Activated CD4-positive, alpha-beta T cell treated with anti-CD3 and anti-CD28 coated beads for 36 hours (primary cell): ENCODE measurements at regions of chr4 and their contacts with region 1.

Region 1: GRCh38 chr4:26197018-26197779 is 123.6 kb upstream of the RBPJ start:
- DNase-seq: peak; percentile 80
- ATAC-seq: peak; percentile 75
- H3K4me3 Mint-ChIP-seq: peak overlapping the region; percentile 52
- H3K27ac Mint-ChIP-seq: peak overlapping the region; percentile 91
- H3K4me1 Mint-ChIP-seq: peaks cover 68% of the 10 kb centered on the region
- H3K27me3 Mint-ChIP-seq: peaks cover 2% of the 10 kb centered on the region

Region 2: DNA sequence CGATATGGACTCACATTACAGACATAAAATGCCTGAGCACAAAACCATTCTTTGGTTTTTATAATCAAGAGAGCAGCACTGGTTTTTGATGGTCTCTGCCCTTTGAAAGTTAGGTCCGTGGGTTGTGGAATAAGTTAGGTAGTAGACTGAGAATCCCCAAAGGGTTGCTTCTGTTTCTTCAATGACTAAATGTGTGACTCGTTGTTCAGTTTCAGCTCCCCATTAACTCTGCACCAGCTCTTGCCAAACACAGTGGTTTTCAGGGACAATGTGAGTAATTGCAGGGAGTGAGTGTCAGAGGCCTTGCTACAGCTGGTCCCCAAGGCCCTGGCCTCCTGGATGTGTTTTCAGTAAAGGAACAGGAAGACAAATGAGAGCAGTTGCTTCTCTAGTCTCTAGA is 258.4 kb before region 1 on chr4:
- CTCF ChIA-PET with region 1: no interaction called
- POLR2A ChIA-PET with region 1: no interaction called
- intact Hi-C with region 1: loop called in 1 of 2 experiments (anchors 1 kb)
- DNase-seq: peak; percentile 76
- ATAC-seq: peak; percentile 97
- H3K4me3 Mint-ChIP-seq: peak overlapping the region; percentile 5
- H3K27ac Mint-ChIP-seq: peak overlapping the region; percentile 72
- H3K4me1 Mint-ChIP-seq: peaks cover 22% of the 10 kb centered on the region
- H3K27me3 Mint-ChIP-seq: peaks cover 18% of the 10 kb centered on the region

Region 3: DNA sequence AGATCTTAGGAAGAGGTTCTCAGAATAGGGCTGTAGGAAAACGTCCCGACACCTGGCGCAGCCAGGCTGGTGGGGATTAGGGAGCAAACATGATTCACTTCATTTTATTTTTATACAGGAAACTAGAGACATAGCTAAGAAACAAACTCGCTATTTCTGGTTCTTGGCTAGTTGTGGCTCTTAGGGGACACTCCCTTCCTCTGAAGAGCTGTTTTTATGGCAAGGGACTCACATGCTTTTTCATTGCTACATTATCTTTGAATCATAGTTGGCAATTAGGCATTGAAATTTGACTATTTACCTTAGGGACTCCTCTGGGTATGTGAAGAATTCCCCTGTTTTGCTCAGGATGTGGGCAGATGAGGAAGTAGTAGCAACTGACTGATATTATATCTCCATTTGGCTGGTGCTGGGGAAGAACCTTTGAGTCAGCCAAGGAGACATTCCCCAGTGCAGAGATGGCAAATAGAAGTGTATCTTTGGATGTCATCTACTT is 108.7 kb before region 1 on chr4:
- CTCF ChIA-PET with region 1: interaction called, 7 read pairs
- POLR2A ChIA-PET with region 1: interaction called, 7 read pairs
- intact Hi-C with region 1: loop called in 1 of 2 experiments (anchors 1 kb)
- DNase-seq: peak; percentile 55
- ATAC-seq: peak; percentile 90
- H3K4me3 Mint-ChIP-seq: peak overlapping the region; percentile 27
- H3K27ac Mint-ChIP-seq: peak overlapping the region; percentile 84
- H3K4me1 Mint-ChIP-seq: peaks cover 47% of the 10 kb centered on the region
- H3K27me3 Mint-ChIP-seq: peaks cover 15% of the 10 kb centered on the region

Region 4: GRCh38 chr4:26150948-26151347 is 46.3 kb before region 1 on chr4:
- CTCF ChIA-PET with region 1: no interaction called
- POLR2A ChIA-PET with region 1: interaction called, 3 read pairs
- intact Hi-C with region 1: loop called (anchors 1 kb)
- DNase-seq: peak; percentile 70
- ATAC-seq: peak; percentile 89
- H3K4me3 Mint-ChIP-seq: no peak overlapping the region
- H3K27ac Mint-ChIP-seq: peak overlapping the region; percentile 82
- H3K4me1 Mint-ChIP-seq: peaks cover 27% of the 10 kb centered on the region
- H3K27me3 Mint-ChIP-seq: peaks cover 7% of the 10 kb centered on the region

Region 5: DNA sequence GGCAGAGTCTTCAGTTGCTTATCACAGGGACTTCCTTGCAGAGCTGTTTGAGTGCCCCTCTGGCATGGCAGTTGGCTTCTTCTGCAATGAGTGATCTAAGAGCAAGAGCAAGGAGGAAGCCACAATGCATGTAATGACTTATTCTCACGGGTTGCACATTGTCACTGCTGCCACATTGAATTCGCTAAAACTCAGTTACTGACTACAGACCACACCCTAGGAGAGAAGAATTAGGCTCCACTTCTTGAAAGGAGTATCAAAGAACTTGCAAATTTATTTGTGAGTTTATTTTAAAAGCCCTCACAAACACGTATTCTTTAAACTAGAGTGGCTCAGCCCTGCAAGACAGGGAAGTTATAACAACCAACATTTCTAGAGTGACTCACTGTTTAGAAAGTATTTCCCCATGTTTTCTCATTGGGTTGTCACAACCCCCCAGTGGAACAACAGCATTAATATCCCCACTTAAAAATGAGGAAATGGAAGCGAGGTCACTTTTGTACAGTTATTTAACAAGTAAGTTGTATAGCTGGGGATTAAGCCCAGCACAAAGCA is 91.2 kb after region 1 on chr4:
- CTCF ChIA-PET with region 1: no interaction called
- POLR2A ChIA-PET with region 1: no interaction called
- intact Hi-C with region 1: loop called in 1 of 2 experiments (anchors 1 kb)
- DNase-seq: peak; percentile 67
- ATAC-seq: peak; percentile 95
- H3K4me3 Mint-ChIP-seq: no peak overlapping the region
- H3K27ac Mint-ChIP-seq: peak overlapping the region; percentile 11
- H3K4me1 Mint-ChIP-seq: peaks cover 16% of the 10 kb centered on the region
- H3K27me3 Mint-ChIP-seq: no peaks in the 10 kb centered on the region